ENCODE measurements at regions of chr4 and their contacts with region 1.

Region 1: DNA sequence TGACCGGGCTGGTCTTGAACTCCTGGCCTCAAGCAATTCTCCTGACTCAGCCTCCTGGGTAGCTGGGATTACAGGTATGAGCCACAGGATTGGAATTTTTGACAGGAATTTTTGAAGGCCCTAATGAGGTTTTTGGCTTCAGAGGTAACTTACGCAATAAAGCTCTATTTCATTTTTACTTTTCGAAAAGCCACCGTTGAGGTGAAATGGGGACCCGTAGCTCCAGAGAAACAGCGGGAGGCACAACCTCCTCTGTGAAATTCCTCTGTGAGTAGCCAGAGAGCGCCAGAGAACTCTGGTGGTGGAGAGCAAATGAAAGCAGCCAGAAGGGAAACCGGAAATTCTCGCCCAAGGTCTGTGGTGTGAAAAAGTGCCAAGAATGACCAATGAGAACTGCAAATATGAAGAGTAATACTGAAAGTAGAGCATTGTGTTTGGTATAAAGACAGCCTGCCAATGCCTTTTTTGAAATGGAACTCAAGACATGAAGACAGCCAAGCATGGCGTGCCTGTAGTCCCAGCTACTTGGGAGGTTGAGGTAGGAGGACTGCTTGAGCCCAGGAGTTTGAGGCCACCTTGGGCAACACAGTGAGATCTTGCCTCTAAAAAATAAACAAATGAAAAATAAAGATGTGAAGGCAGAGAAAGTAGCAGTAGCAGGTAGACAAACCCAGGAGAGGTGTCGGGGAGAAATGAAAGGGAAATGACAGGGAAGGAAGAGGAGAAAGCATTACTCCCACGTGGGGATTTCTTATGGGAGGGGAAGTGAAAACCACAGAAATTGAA is 33.0 kb upstream of the TMEM131L start:
- DNase-seq: peak; percentile 86
- ATAC-seq: peak; percentile 87
- H3K4me3 Mint-ChIP-seq: peak overlapping the region; percentile 68
- H3K27ac Mint-ChIP-seq: peak overlapping the region; percentile 93
- H3K4me1 Mint-ChIP-seq: peaks cover 62% of the 10 kb centered on the region
- H3K27me3 Mint-ChIP-seq: no peaks in the 10 kb centered on the region

Region 2: GRCh38 chr4:153497988-153498967 is 65.1 kb after region 1 on chr4:
- CTCF ChIA-PET with region 1: interaction called, 5 read pairs
- POLR2A ChIA-PET with region 1: interaction called, 4 read pairs
- intact Hi-C with region 1: loop called in 1 of 2 experiments (anchors 2 kb)
- DNase-seq: no peak
- ATAC-seq: peak; percentile 14
- H3K4me3 Mint-ChIP-seq: peak overlapping the region; percentile 75
- H3K27ac Mint-ChIP-seq: peak overlapping the region; percentile 99
- H3K4me1 Mint-ChIP-seq: peaks cover 95% of the 10 kb centered on the region
- H3K27me3 Mint-ChIP-seq: no peaks in the 10 kb centered on the region

Region 3: DNA sequence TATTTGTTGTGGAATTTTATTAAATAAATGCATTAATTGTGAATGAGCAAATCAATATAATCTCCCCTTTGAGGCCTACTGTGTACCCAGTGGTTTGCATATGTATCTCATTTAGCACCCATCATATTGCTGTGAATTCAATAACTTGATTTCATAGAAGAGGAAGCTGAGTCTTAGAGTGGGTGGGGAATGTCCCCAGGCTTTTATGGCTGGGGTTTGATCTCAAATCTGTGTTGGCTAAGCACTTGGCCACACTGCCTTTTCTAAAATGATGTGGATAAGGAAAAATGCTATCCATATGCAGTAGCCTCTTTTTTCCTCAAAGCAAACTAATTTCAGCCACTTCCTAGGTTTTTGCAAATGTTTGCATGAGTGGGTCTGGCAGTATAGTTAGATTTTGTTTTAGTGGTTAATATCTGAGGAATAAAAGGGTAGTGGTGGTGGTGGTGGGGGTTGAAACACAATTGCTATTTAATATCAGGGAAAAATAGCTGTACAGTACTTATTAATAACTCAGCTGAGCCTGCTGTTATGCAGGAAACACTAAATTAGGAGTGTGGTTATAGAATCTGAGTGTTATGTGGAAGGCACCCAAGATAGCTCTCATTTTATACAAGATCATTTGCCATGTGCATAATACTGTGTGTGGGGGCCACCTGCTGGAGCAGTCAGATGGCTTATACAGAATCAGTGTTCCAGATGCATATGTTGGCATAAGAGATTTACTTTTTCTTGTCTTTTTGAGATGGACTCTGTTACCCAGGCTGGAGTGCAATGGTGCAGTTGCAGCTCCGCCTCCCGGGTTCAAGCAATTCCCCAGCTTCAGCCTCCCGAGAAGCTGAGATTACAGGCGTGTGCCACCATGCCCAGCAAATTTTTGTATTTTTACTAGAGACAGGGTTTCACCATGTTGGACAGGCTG is 141.0 kb after region 1 on chr4:
- CTCF ChIA-PET with region 1: interaction called, 17 read pairs
- POLR2A ChIA-PET with region 1: no interaction called
- intact Hi-C with region 1: loop called (anchors 1 kb)
- DNase-seq: peak; percentile 77
- ATAC-seq: peak; percentile 87
- H3K4me3 Mint-ChIP-seq: no peak overlapping the region
- H3K27ac Mint-ChIP-seq: peak overlapping the region; percentile 39
- H3K4me1 Mint-ChIP-seq: peaks cover 78% of the 10 kb centered on the region
- H3K27me3 Mint-ChIP-seq: no peaks in the 10 kb centered on the region

Region 4: DNA sequence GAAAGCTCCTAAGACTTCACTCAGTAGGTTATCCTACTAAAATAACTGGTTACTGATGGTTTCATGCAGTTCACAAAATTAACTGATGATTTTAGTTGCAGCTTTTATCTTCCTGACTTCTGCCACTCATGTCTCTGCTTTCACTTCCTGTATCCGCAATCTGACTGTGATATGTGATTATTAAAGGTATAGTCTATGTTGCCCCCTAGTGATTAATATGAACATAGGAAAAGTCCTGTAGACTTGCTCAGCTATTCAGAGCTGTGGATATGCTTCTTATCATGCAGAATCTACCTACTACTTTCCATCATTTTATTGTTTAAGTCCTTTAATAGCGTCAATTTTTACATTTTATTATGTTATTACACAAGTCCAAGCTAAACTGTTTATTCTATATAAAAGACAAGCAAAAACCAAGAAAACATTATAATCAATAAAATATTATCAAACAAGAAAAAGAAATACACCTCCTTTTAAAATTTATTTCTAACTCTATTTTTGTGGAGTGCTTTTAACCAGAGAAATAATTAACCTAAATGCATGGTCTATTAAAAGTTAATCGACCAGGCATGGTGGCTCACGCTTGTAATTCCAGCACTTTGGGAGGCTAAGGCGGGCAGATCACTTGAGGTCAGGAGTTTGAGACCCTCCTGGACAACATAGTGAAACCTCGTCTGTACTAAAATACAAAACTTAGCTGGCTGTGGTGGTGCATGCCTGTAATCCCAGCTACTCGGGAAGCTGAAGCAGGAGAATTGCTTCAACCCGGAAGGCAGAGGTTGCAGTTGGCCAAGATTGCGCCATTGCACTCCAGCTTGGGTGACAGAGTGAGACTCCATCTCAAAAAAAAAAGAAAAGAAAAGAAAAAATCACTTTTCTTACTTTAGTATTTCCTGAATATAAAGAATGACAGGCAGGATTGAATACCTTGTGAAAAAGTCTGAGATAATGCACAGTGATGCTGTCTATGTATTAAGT is 210.5 kb after region 1 on chr4:
- CTCF ChIA-PET with region 1: interaction called, 5 read pairs
- POLR2A ChIA-PET with region 1: no interaction called
- intact Hi-C with region 1: loop called (anchors 1 to 5 kb)
- DNase-seq: no peak
- ATAC-seq: peak; percentile 92
- H3K4me3 Mint-ChIP-seq: no peak overlapping the region
- H3K27ac Mint-ChIP-seq: no peak overlapping the region
- H3K4me1 Mint-ChIP-seq: peaks cover 23% of the 10 kb centered on the region
- H3K27me3 Mint-ChIP-seq: no peaks in the 10 kb centered on the region

Region 5: DNA sequence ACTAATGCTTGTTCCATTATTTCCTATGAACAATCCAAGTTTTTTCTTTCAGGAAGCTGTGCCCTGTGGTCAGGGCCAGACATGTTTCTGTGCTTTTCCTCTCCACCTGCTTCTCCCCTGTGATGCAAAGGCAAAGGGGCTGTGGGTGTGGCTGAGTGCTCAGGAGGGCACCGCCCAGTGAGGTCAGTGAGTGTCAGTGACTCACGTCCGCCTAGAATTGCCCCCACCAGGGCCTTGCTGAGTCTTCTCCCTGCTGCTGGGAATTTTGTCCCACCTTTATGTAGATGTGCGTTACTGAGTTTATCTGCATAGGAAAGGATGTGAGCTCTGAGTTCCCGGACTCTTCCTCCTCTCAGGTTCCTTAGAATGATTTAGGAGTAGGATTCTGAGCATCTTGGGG is 775.3 kb after region 1 on chr4:
- CTCF ChIA-PET with region 1: no interaction called
- POLR2A ChIA-PET with region 1: no interaction called
- intact Hi-C with region 1: no loop called
- DNase-seq: no peak
- ATAC-seq: no peak
- H3K4me3 Mint-ChIP-seq: no peak overlapping the region
- H3K27ac Mint-ChIP-seq: no peak overlapping the region
- H3K4me1 Mint-ChIP-seq: no peaks in the 10 kb centered on the region
- H3K27me3 Mint-ChIP-seq: peaks cover 13% of the 10 kb centered on the region

Measured in activated CD4-positive, alpha-beta T cell treated with anti-CD3 and anti-CD28 coated beads for 36 hours (primary cell).